GM10248 (cell line): ENCODE measurements at regions of chrX and their contacts with region 1.

Region 1: DNA sequence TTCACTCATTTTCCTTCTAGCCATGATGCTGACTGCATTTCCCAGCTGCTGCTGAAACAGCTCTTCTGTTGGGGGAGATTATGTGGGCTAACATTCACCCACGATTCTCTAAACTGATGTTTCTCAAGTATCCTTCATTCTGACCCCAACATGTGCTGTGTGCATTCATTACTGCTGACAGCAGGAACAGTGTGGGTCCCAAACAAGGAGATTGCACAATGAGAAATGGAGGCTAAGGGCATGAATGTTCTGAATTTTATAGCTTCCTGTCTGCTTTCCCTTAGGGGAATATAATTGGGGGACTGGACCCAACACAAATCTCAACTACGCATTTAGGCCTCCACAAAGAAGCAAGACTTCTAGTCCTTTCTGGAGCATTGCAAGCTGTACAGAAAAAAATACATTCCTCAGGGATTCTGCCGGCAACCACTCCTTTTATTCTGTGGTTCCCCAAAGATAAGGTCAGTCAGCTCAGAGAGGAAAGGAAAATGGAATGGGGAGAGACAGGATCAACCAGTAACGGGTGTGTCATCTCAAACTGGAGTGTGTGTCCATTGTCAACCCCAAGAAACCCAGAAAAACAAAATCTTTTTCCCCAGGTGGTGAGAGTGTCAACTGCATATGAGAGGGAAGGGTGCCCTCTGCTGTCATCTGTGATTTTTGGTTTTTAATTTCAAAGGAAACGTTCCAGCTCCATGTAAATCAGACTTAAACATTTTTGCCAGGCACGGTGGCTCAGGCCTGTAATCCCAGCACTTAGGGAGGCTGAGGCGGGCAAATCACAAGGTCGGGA is 81.5 kb upstream of the EGFL6 start:
- DNase-seq: peak; percentile 45
- CTCF ChIP-seq: peak; percentile 8

Region 2: GRCh38 chrX:13087322-13088155 is 400.4 kb before region 1 on chrX:
- CTCF ChIA-PET with region 1: interaction called, 16 read pairs
- POLR2A ChIA-PET with region 1: no interaction called
- DNase-seq: peak; percentile 61
- CTCF ChIP-seq: no peak

Region 3: DNA sequence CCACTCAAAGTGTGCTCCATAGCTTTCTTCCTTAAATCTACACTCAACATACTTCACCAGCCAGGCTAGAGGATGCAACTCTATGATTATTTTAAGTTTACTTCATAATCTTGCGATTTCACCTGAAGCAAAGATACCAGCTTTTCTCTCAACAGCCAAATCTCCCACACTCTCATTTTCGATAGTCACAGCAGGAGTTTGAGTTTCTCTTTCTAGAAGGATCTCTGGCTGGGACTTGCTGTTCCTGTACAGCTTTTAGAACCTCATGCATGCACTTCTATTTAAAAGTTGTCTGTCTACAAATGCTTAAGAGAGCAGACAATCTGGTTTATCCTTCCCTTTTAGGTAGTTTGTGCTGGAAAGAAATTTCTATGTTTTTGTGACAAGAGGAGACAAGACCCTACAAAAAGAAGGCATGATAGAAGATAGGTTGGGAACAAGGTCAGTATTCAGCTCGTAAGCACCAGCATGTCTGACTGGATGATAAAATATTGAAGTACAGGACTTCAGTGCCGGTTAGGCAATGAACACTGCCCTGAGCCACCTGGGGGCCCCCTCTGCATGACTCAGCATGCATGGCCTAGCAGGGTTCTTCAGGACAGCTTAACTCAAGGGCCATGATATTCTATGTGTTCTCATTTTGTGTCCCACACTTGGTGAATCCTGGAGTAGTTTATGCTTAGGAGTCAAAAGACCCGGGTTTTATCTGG is 233.7 kb before region 1 on chrX:
- CTCF ChIA-PET with region 1: interaction called, 12 read pairs
- POLR2A ChIA-PET with region 1: no interaction called
- DNase-seq: peak; percentile 14
- CTCF ChIP-seq: peak; percentile 28

Region 4: GRCh38 chrX:13473442-13474163 is 14.3 kb before region 1 on chrX:
- CTCF ChIA-PET with region 1: interaction called, 14 read pairs
- POLR2A ChIA-PET with region 1: no interaction called
- DNase-seq: peak; percentile 26
- CTCF ChIP-seq: no peak

Region 5: GRCh38 chrX:13506574-13506973 is 18.6 kb after region 1 on chrX:
- CTCF ChIA-PET with region 1: interaction called, 10 read pairs
- POLR2A ChIA-PET with region 1: no interaction called
- DNase-seq: peak; percentile 59
- CTCF ChIP-seq: peak; percentile 42